Ovary (tissue), 10 donors: ENCODE measurements at regions of chr15 and their contacts with region 1.

Region 1: GRCh38 chr15:68637767-68638404 is 59.1 kb downstream of the CORO2B start:
- DNase-seq: peak; percentile 85 to 90 (median 88)
- H3K4me3 ChIP-seq: no peak overlapping the region
- H3K27ac ChIP-seq: peak overlapping the region; percentile 27 to 86
- H3K4me1 ChIP-seq: peaks cover 61% of the 10 kb centered on the region
- H3K27me3 ChIP-seq: no peaks in the 10 kb centered on the region
- CTCF ChIP-seq: no peak
- EP300 ChIP-seq: no peak
- POLR2A ChIP-seq: no peak

Region 2: GRCh38 chr15:68586274-68586961 is 51.5 kb before region 1 on chr15:
- intact Hi-C with region 1: loop called in 1 of 4 experiments (anchors 10 kb)
- DNase-seq: peak in 2 of 5 donors; percentile 18 to 27
- H3K4me3 ChIP-seq: no peak overlapping the region
- H3K27ac ChIP-seq: peak overlapping the region in 1 of 2 donors; percentile 27
- H3K4me1 ChIP-seq: peaks cover 35% of the 10 kb centered on the region
- H3K27me3 ChIP-seq: no peaks in the 10 kb centered on the region
- CTCF ChIP-seq: no peak
- EP300 ChIP-seq: no peak
- POLR2A ChIP-seq: no peak